Endothelial cell of umbilical vein (primary cell): ENCODE measurements at regions of chr7 and their contacts with region 1.

Region 1: GRCh38 chr7:140003913-140004382 is 58.8 kb downstream of the PARP12 start:
- DNase-seq: peak; percentile 58
- H3K4me3 ChIP-seq: no peak overlapping the region
- H3K27ac ChIP-seq: no peak overlapping the region
- H3K4me1 ChIP-seq: no peaks in the 10 kb centered on the region
- H3K27me3 ChIP-seq: no peaks in the 10 kb centered on the region
- CTCF ChIP-seq: peak; percentile 51 to 60
- POLR2A ChIP-seq: no peak

Region 2: DNA sequence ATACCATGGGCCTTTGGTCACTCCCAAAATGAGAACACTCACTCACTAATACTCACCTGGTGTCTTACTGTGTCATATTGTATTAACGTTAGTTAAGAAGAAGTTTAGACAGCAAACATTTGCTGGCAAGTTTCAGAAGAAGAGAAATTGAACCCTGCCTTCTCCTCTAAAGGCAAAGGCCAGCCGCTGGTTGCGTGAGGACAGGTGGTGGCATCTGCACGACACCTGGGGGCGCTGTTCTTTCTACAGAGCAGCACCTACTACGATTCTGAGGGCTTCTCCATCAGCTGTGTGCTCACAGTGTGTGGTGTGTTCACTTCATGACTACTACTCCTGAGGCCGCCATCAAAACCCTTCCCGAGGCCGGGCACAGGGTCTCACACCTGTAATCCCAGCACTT is 498.4 kb before region 1 on chr7:
- CTCF ChIA-PET with region 1: interaction called, 80 read pairs
- POLR2A ChIA-PET with region 1: no interaction called
- dilution Hi-C with region 1: no loop called
- intact Hi-C with region 1: loop called (anchors 1 kb)
- DNase-seq: no peak
- H3K4me3 ChIP-seq: no peak overlapping the region
- H3K27ac ChIP-seq: no peak overlapping the region
- H3K4me1 ChIP-seq: no peaks in the 10 kb centered on the region
- H3K27me3 ChIP-seq: no peaks in the 10 kb centered on the region
- CTCF ChIP-seq: peak; percentile 8 to 28
- POLR2A ChIP-seq: no peak

Region 3: DNA sequence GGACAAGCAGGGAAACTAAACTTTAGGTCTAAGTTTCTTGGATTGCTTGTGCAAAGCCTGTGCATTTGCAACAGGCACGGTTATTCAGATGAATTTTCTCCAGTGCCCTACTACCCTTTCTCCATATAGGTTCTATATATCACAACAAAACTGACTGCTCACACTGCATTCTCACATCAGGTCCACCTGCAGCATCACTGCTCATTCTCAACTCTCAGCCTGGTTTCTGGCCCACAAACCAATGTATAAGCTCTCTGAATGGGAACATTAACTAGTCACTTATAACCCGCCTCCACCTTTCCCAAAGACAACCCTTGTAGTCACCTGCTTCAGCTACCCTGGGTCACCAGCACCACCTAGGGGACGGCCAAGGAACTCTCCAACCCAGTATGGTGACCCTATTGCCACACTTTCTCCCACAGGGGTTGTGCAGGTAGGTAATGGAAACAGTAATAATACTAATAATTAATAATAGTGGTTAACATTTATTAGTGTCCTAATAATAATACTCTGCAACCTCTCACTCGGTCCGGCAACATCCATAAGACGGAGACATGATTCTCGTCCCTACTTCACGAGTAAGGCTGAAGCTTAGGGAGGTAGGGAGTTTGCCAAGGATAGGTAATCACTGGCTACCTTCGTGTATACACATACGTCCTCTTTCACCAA is 383.1 kb before region 1 on chr7:
- CTCF ChIA-PET with region 1: interaction called, 112 read pairs
- POLR2A ChIA-PET with region 1: no interaction called
- dilution Hi-C with region 1: loop called (anchors 25 kb)
- intact Hi-C with region 1: loop called (anchors 1 kb)
- DNase-seq: peak; percentile 9
- H3K4me3 ChIP-seq: no peak overlapping the region
- H3K27ac ChIP-seq: no peak overlapping the region
- H3K4me1 ChIP-seq: no peaks in the 10 kb centered on the region
- H3K27me3 ChIP-seq: no peaks in the 10 kb centered on the region
- CTCF ChIP-seq: peak; percentile 59 to 63
- POLR2A ChIP-seq: no peak

Region 4: DNA sequence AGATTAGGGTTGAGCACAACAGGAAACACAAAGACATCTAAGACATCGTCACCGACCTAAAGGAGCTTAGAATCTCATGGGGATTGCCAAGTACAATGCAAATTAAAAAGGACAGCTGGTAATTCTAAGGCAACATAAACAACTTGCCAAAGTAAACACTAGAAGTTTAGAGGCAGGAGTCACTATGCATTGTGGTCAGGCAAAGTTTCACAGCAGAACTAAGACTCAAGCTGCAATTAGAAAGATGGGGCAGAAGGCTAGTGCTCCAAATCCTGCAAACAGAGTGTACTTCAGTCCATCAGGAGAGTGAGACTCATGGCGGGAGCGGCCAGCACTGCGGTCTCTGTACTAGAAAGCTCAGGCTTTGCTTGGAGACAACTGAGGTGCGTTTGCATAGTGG is 278.9 kb before region 1 on chr7:
- CTCF ChIA-PET with region 1: interaction called, 3 read pairs
- POLR2A ChIA-PET with region 1: no interaction called
- dilution Hi-C with region 1: no loop called
- intact Hi-C with region 1: loop called (anchors 5 kb)
- DNase-seq: peak; percentile 33
- H3K4me3 ChIP-seq: no peak overlapping the region
- H3K27ac ChIP-seq: no peak overlapping the region
- H3K4me1 ChIP-seq: peaks cover 41% of the 10 kb centered on the region
- H3K27me3 ChIP-seq: no peaks in the 10 kb centered on the region
- CTCF ChIP-seq: no peak
- POLR2A ChIP-seq: no peak

Region 5: DNA sequence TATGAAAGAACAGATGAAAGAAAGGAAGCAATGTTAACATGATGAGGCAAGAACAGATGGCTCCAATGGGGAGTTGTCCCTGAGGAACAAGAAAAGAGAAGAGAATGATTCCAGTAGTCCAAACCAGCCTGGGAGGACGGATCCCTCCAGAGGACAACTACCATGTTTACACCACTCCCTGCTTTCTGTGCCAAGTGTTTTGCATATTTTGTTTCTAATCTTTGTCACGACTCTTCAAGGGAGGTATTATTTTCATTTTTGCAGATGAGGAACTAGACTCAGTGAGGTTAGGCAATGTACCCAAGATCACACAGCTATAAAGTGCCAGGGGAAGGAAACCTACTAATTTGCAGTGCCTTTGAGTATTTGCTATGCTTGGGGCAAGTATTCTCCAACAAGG is 57.4 kb before region 1 on chr7:
- CTCF ChIA-PET with region 1: no interaction called
- POLR2A ChIA-PET with region 1: no interaction called
- dilution Hi-C with region 1: no loop called
- intact Hi-C with region 1: no loop called
- DNase-seq: no peak
- H3K4me3 ChIP-seq: no peak overlapping the region
- H3K27ac ChIP-seq: no peak overlapping the region
- H3K4me1 ChIP-seq: no peaks in the 10 kb centered on the region
- H3K27me3 ChIP-seq: peaks cover 2 to 6% of the 10 kb centered on the region in 2 experiments
- CTCF ChIP-seq: no peak
- POLR2A ChIP-seq: no peak

Region 6: GRCh38 chr7:140017543-140017942 is 13.6 kb after region 1 on chr7:
- CTCF ChIA-PET with region 1: interaction called, 14 read pairs
- POLR2A ChIA-PET with region 1: no interaction called
- dilution Hi-C with region 1: no loop called
- intact Hi-C with region 1: no loop called
- DNase-seq: no peak
- H3K4me3 ChIP-seq: no peak overlapping the region
- H3K27ac ChIP-seq: no peak overlapping the region
- H3K4me1 ChIP-seq: peaks cover 2% of the 10 kb centered on the region
- H3K27me3 ChIP-seq: peaks cover 0 to 3% of the 10 kb centered on the region in 2 experiments
- CTCF ChIP-seq: no peak
- POLR2A ChIP-seq: no peak

Region 7: GRCh38 chr7:140342727-140343514 is 339.0 kb after region 1 on chr7:
- CTCF ChIA-PET with region 1: interaction called, 3 read pairs
- POLR2A ChIA-PET with region 1: no interaction called
- dilution Hi-C with region 1: no loop called
- intact Hi-C with region 1: loop called (anchors 1 kb)
- DNase-seq: peak; percentile 31
- H3K4me3 ChIP-seq: no peak overlapping the region
- H3K27ac ChIP-seq: no peak overlapping the region
- H3K4me1 ChIP-seq: peaks cover 6% of the 10 kb centered on the region
- H3K27me3 ChIP-seq: no peaks in the 10 kb centered on the region
- CTCF ChIP-seq: peak; percentile 40 to 60
- POLR2A ChIP-seq: no peak